ENCODE measurements at regions of chr17 and their contacts with region 1.

Region 1: DNA sequence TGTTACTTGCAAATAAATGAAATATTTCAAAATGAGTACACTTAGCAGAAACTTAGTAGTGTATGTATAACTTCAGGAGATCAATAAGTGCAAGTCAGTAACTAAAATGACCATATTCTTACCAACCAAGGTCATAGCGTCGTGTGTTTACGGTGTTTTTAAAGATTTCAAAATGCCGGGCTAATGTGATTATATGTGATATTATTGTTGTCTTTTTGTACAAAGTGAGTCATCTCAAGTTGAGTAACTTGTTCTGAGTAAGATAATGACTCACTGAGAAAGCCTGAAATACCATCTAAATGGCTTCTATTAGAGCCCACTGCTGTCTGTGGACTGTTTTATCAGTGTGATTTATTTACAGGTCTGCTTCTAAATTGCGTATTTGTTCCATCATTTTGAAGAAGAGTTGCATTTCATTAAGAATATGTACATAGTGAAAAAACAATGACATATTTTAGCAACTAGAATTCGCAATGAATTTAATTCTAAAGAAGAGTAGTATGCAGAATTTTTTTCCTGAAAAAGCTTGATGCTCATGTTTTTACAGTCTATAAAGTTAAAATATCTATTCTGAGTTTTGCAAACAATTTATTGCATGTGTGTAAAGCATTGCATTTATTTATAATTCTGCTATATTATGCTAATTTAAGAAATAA is 12.7 kb downstream of the KRT12 start:
- DNase-seq: peak; percentile 71 to 84
- ATAC-seq: peak; percentile 84 to 92
- H3K4me3 ChIP-seq: no peak overlapping the region
- H3K27ac ChIP-seq: peak overlapping the region; percentile 42 to 68
- H3K4me1 ChIP-seq: peaks cover 71% of the 10 kb centered on the region
- CTCF ChIP-seq: no peak
- EP300 ChIP-seq: peak; percentile 80; a peak in 3 of 5 replicates
- POLR2A ChIP-seq: no peak
- RAD21 ChIP-seq: peak in 1 of 2 experiments; percentile 42; a peak in 1 of 5 replicates

Region 2: GRCh38 chr17:40433551-40434415 is 420.5 kb before region 1 on chr17:
- CTCF ChIA-PET with region 1: no interaction called
- POLR2A ChIA-PET with region 1: no interaction called
- DNase-seq: peak in 1 of 2 experiments; percentile 66
- ATAC-seq: peak; percentile 86 to 93
- H3K4me3 ChIP-seq: no peak overlapping the region
- H3K27ac ChIP-seq: peak overlapping the region in 1 of 2 experiments; percentile 25; a peak in 3 of 6 replicates
- H3K4me1 ChIP-seq: 0 out of 3 replicates have a peak, but pooled peaks cover 3% of the 10 kb centered on the region
- CTCF ChIP-seq: peak; percentile 33; the same call in 2 of the 3 replicates
- EP300 ChIP-seq: no peak
- POLR2A ChIP-seq: no peak
- RAD21 ChIP-seq: peak in 1 of 2 experiments; percentile 50; a peak in 3 of 5 replicates

Region 3: GRCh38 chr17:40699371-40699770 is 154.9 kb before region 1 on chr17:
- CTCF ChIA-PET with region 1: no interaction called
- POLR2A ChIA-PET with region 1: no interaction called
- DNase-seq: no peak
- ATAC-seq: no peak
- H3K4me3 ChIP-seq: no peak overlapping the region
- H3K27ac ChIP-seq: no peak overlapping the region
- H3K4me1 ChIP-seq: peaks cover 24% of the 10 kb centered on the region
- CTCF ChIP-seq: no peak
- EP300 ChIP-seq: no peak
- POLR2A ChIP-seq: no peak
- RAD21 ChIP-seq: no peak

Region 4: DNA sequence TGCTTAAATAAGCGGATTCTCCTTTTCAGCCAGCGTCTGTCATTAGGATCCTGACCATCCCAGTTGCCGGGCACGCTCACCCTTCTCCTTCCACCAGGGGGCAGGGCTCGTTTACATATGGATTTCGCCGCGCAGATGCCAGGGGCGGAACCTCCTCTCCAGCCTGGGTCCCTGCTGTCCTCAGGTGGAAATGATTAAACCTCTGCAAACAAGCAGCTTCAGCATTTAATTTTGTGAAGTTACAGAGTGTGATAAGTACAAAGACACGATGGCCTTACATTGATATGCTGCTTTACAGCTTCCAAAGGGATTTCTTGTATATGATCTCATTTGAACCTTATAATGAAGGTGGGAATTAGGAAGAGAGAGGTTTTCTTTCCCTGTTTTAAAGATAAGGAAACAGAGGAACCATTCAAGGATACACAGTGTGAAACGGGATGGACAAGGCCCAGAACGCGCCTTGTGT is 50.6 kb before region 1 on chr17:
- CTCF ChIA-PET with region 1: interaction called, 54 read pairs
- POLR2A ChIA-PET with region 1: no interaction called
- DNase-seq: peak; percentile 88 to 96
- ATAC-seq: peak; percentile 99
- H3K4me3 ChIP-seq: no peak overlapping the region
- H3K27ac ChIP-seq: peak overlapping the region; percentile 27 to 56; a peak in 4 of 6 replicates
- H3K4me1 ChIP-seq: peaks cover 7% of the 10 kb centered on the region
- CTCF ChIP-seq: peak; percentile 98
- EP300 ChIP-seq: no peak
- POLR2A ChIP-seq: no peak
- RAD21 ChIP-seq: peak; percentile 100

Region 5: GRCh38 chr17:40884708-40885512 is 30.6 kb after region 1 on chr17 and contains the start of gene KRT20:
- CTCF ChIA-PET with region 1: interaction called, 35 read pairs
- POLR2A ChIA-PET with region 1: no interaction called
- DNase-seq: peak in 1 of 2 experiments; percentile 64
- ATAC-seq: peak; percentile 62 to 79; a peak in 4 of 6 replicates
- H3K4me3 ChIP-seq: no peak within 1 kb of the TSS
- H3K27ac ChIP-seq: peak within 1 kb of the TSS in 1 of 2 experiments; percentile 31; a peak in 1 of 6 replicates
- H3K4me1 ChIP-seq: peaks cover 15% of the 10 kb centered on the region
- CTCF ChIP-seq: 0 out of 3 replicates have a peak, but pooled peaks have one; percentile 17
- EP300 ChIP-seq: no peak
- POLR2A ChIP-seq: no peak
- RAD21 ChIP-seq: no peak
- polyA plus RNA-seq, gene KRT20: 0.28 and 0.34 TPM in 2 replicates

Region 6: DNA sequence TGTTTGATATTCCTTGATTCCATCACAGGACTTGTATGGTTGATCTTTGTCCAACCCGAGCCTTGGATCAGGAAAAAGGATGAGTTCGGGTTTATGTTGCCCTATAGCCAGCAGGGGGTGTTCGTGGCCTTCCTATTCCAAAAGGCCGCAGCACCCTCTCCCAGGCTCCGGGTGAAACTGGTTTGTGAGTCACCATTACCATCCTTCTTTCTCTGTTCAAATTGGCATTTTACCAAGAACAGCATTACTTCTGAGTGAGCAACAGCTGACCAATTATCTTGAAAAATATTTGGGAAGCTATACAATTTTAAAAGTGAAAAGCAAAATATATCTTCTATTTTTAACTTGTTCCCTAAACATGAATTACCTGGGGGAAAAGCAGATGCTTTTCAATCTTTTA is 55.1 kb after region 1 on chr17:
- CTCF ChIA-PET with region 1: interaction called, 104 read pairs
- POLR2A ChIA-PET with region 1: interaction called, 7 read pairs
- DNase-seq: peak; percentile 91 to 92
- ATAC-seq: peak; percentile 91 to 95
- H3K4me3 ChIP-seq: no peak overlapping the region
- H3K27ac ChIP-seq: peak overlapping the region; percentile 62 to 65
- H3K4me1 ChIP-seq: peaks cover 31% of the 10 kb centered on the region
- CTCF ChIP-seq: peak; percentile 98
- EP300 ChIP-seq: no peak
- POLR2A ChIP-seq: no peak
- RAD21 ChIP-seq: peak; percentile 99 to 100

Region 7: GRCh38 chr17:41329281-41329948 is 475.1 kb after region 1 on chr17:
- CTCF ChIA-PET with region 1: interaction called, 58 read pairs
- POLR2A ChIA-PET with region 1: no interaction called
- DNase-seq: peak; percentile 78 to 79
- ATAC-seq: peak; percentile 75 to 95
- H3K4me3 ChIP-seq: no peak overlapping the region
- H3K27ac ChIP-seq: peak overlapping the region in 1 of 2 experiments; percentile 44; a peak in 1 of 6 replicates
- H3K4me1 ChIP-seq: no peaks in the 10 kb centered on the region
- CTCF ChIP-seq: peak; percentile 73
- EP300 ChIP-seq: no peak
- POLR2A ChIP-seq: no peak
- RAD21 ChIP-seq: peak; percentile 88 to 95

Measured in A549 (cell line).